ENCODE measurements at regions of chr2 and their contacts with region 1.

Region 1: DNA sequence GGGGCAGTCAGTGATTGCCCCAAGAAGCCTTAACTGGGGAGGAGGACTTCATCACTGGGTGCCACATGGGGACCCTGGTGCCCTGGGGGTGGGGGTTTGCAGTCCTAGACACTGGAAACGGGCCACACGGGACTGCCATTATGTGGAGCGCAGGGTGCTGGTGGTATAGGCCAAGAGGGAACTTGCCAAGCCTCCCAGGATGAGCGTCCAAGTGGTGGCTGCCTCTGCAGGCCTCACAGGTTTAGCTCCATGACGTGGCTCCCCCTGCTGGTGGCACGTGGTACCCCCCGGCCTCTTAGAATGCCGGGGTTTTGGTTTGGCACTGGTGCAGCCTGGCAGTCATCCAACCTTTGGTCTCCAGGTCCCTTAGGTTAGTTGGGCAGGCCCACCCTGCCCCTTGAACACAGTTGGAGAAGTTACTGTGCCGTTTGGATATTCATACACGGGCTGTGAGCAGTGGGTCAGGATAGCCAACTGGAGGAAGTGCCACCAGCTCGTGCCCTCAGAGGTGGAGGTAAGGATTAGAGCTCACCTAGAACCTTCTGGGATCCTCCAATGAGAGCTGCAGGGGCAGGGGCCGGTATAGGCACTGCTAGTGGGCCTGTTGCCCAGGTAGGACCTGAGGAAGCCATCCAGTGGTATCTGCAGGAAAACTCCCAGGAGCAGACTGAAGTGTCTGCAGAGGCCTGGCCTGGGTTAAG is 5.6 kb downstream of the PTMA start:
- DNase-seq: no peak
- H3K4me3 ChIP-seq: no peak overlapping the region
- CTCF ChIP-seq: peak; percentile 98

Region 2: GRCh38 chr2:231280846-231281245 is 433.0 kb before region 1 on chr2:
- CTCF ChIA-PET with region 1: no interaction called
- POLR2A ChIA-PET with region 1: no interaction called
- DNase-seq: no peak
- H3K4me3 ChIP-seq: no peak overlapping the region
- CTCF ChIP-seq: no peak

Region 3: DNA sequence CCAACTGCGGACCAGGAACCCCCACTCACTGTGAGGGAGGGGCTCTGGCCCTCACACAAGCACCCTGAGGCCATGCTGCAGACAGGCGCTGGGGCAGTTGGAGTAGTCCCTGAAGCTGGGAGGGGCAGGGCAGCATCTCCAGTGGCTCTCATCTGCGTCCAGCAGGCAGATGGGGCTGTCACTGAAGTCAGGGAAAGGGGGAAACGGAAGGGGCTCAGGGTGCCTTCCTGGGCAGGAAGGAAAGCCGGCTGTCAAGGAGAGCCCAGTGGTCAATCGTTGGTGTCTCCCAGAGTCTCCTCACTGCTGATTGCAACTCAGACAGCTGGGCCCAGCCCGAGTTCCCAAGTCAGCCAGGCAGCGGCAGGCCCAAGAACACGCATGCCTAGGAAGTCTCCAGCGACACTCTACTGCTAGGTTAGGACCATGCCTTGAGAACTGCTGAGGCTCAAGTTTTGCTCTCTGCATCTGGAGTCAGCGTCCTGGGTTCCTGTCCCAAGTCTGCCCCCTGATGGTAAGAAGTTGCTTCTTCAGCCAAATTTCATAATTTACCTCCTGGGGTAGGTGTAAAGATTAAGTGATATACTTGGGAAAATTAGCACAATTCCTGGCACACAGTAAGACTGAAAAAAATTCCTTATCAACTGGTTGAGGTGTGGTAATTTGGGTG is 156.2 kb before region 1 on chr2:
- CTCF ChIA-PET with region 1: interaction called, 10 read pairs
- POLR2A ChIA-PET with region 1: no interaction called
- DNase-seq: peak; percentile 23
- H3K4me3 ChIP-seq: no peak overlapping the region
- CTCF ChIP-seq: peak; percentile 66

Region 4: GRCh38 chr2:231621129-231621879 is 92.6 kb before region 1 on chr2:
- CTCF ChIA-PET with region 1: interaction called, 30 read pairs
- POLR2A ChIA-PET with region 1: interaction called, 3 read pairs
- DNase-seq: no peak
- H3K4me3 ChIP-seq: no peak overlapping the region
- CTCF ChIP-seq: no peak

Region 5: DNA sequence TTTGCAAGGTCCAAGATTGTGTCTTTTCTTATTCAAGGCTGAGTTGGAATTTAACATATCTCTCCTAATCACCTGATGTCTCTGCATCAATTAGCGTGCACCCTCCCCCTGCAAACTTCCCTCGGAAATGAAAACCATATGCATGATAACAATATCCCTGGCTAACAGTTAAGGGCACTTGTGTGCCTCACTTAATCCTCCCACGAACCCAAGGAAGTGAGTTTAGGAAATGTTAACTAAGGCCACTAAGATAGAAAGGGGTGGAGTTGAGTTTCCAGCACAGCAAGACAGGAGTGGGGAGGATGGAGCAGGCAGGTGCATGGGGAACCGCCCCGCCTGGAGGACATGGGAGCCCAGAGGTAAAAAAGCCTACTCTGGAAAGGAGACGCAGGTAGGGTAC is 58.0 kb before region 1 on chr2:
- CTCF ChIA-PET with region 1: interaction called, 111 read pairs
- POLR2A ChIA-PET with region 1: no interaction called
- DNase-seq: no peak
- H3K4me3 ChIP-seq: no peak overlapping the region
- CTCF ChIP-seq: no peak

Region 6: GRCh38 chr2:231727621-231728020 is 13.7 kb after region 1 on chr2:
- CTCF ChIA-PET with region 1: interaction called, 75 read pairs
- POLR2A ChIA-PET with region 1: interaction called, 4 read pairs
- DNase-seq: no peak
- H3K4me3 ChIP-seq: no peak overlapping the region
- CTCF ChIP-seq: no peak

Region 7: DNA sequence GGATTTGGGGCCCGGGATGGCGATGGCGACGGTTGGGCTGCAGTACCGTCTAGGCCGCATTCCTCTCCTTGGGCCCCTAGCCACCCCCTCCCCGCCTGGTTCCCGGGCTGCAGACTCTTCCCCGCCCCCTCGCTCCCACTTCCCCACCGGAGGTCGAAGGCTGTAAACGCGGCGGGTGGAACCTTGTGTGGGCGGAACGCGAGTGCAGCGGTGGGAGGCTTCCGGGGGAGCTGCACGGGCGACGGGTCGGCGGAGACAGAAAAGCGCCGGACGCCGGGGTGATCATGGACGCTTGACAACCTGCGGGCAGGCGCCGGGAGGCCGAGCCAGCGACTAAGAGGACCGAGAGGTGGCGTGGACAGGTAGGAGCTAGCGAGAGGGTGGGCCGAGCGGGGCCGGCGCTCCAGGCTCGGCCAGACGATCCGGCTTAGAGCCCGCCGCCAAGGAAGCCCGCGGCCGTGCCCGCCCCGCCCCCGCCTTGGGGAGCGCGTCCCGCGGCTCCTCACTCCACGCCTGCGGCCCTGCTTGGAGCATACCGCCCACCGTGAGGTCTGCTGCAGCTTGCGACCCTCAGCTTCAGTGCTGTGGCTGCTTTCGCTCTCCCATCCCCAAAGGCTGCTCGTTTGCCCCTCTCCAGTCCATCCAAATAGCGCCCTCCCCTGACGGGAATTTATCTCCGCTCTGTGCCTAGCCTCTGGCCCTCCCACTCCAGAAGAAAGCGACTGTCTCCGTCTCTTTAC is 72.5 kb after region 1 on chr2 and contains the start of gene COPS7B:
- CTCF ChIA-PET with region 1: interaction called, 19 read pairs
- POLR2A ChIA-PET with region 1: interaction called, 4 read pairs
- DNase-seq: no peak
- H3K4me3 ChIP-seq: peak within 1 kb of the TSS; percentile 99
- CTCF ChIP-seq: peak; percentile 56